ENCODE measurements at regions of chr17 and their contacts with region 1.

Region 1: GRCh38 chr17:42577532-42578281 is at the start of gene PSMC3IP:
- DNase-seq: peak; percentile 81 to 95 (median 90)
- ATAC-seq: peak; percentile 89
- H3K4me3 ChIP-seq: peak within 1 kb of the TSS; percentile 67
- H3K4me3 Mint-ChIP-seq: peak within 1 kb of the TSS; percentile 97
- H3K27ac ChIP-seq: peak within 1 kb of the TSS; percentile 49 to 67
- H3K27ac Mint-ChIP-seq: peak within 1 kb of the TSS; percentile 80
- H3K4me1 ChIP-seq: peaks cover 21% of the 10 kb centered on the region
- H3K4me1 Mint-ChIP-seq: peaks cover 32% of the 10 kb centered on the region
- H3K27me3 ChIP-seq: no peaks in the 10 kb centered on the region
- H3K27me3 Mint-ChIP-seq: no peaks in the 10 kb centered on the region
- CTCF ChIP-seq: peak; percentile 53
- total RNA-seq, gene PSMC3IP: 2.6 to 3.4 TPM

Region 2: GRCh38 chr17:42548070-42548837 is 29.5 kb before region 1 on chr17:
- CTCF ChIA-PET with region 1: interaction called, 3 read pairs
- POLR2A ChIA-PET with region 1: interaction called, 9 read pairs
- intact Hi-C with region 1: loop called in 1 of 2 experiments (anchors 1 kb)
- DNase-seq: peak; percentile 67 to 92 (median 80)
- ATAC-seq: peak; percentile 97
- H3K4me3 ChIP-seq: peak overlapping the region; percentile 26
- H3K4me3 Mint-ChIP-seq: peak overlapping the region; percentile 35
- H3K27ac ChIP-seq: no peak overlapping the region
- H3K27ac Mint-ChIP-seq: no peak overlapping the region
- H3K4me1 ChIP-seq: peaks cover 21% of the 10 kb centered on the region
- H3K4me1 Mint-ChIP-seq: peaks cover 16% of the 10 kb centered on the region
- H3K27me3 ChIP-seq: no peaks in the 10 kb centered on the region
- H3K27me3 Mint-ChIP-seq: no peaks in the 10 kb centered on the region
- CTCF ChIP-seq: peak; percentile 62

Region 3: DNA sequence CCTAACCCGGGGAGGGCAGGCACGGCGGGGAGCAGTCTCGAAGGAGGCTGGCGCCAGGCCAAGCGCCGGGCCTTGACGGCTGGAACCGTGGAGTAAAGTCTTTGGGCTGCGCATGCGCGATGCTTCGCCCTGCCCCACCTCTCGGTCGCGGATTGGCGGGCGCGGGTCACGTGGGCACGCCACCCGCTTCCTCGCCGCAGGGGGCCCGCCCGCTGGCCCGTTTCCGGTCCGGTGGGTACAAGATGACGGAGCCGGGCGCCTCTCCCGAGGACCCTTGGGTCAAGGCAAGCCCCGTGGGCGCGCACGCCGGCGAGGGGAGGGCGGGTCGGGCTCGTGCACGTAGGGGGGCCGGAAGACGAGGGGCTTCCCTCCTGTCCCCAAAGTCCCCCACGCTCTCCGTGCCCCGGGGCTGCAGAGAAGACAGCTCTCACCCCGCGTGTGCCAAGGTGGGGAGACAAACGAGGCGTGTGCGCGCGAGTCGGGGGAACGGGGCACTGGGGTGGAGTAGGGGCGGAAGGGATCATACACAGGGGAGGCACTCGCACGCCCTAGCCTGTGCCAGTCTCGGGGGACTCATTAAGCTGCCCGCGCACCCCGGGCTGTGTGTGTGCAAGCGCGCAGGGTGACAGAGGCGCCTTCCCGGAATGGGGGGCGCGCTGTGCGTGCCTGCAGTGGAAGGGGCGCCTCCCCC is 10.7 kb before region 1 on chr17 and contains the start of gene MLX:
- CTCF ChIA-PET with region 1: interaction called, 45 read pairs
- POLR2A ChIA-PET with region 1: interaction called, 26 read pairs
- intact Hi-C with region 1: no loop called
- DNase-seq: peak; percentile 83 to 97 (median 90)
- ATAC-seq: peak; percentile 68
- H3K4me3 ChIP-seq: peak within 1 kb of the TSS; percentile 96
- H3K4me3 Mint-ChIP-seq: peak within 1 kb of the TSS; percentile 97
- H3K27ac ChIP-seq: peak within 1 kb of the TSS; percentile 83 to 86
- H3K27ac Mint-ChIP-seq: peak within 1 kb of the TSS; percentile 96
- H3K4me1 ChIP-seq: peaks cover 64% of the 10 kb centered on the region
- H3K4me1 Mint-ChIP-seq: peaks cover 42% of the 10 kb centered on the region
- H3K27me3 ChIP-seq: no peaks in the 10 kb centered on the region
- H3K27me3 Mint-ChIP-seq: no peaks in the 10 kb centered on the region
- CTCF ChIP-seq: no peak
- total RNA-seq, gene MLX: 29.2 to 32.1 TPM

Region 4: GRCh38 chr17:42642336-42642735 is 64.6 kb after region 1 on chr17:
- CTCF ChIA-PET with region 1: no interaction called
- POLR2A ChIA-PET with region 1: no interaction called
- intact Hi-C with region 1: no loop called
- DNase-seq: no peak
- ATAC-seq: no peak
- H3K4me3 ChIP-seq: no peak overlapping the region
- H3K4me3 Mint-ChIP-seq: no peak overlapping the region
- H3K27ac ChIP-seq: no peak overlapping the region
- H3K27ac Mint-ChIP-seq: no peak overlapping the region
- H3K4me1 ChIP-seq: no peaks in the 10 kb centered on the region
- H3K4me1 Mint-ChIP-seq: no peaks in the 10 kb centered on the region
- H3K27me3 ChIP-seq: no peaks in the 10 kb centered on the region
- H3K27me3 Mint-ChIP-seq: peaks cover 14% of the 10 kb centered on the region
- CTCF ChIP-seq: no peak

Region 5: GRCh38 chr17:42677008-42677857 is 99.5 kb after region 1 on chr17:
- CTCF ChIA-PET with region 1: interaction called, 24 read pairs
- POLR2A ChIA-PET with region 1: interaction called, 22 read pairs
- intact Hi-C with region 1: loop called (anchors 1 to 2 kb)
- DNase-seq: peak; percentile 92 to 99 (median 97)
- ATAC-seq: peak; percentile 85
- H3K4me3 ChIP-seq: peak overlapping the region; percentile 61
- H3K4me3 Mint-ChIP-seq: peak overlapping the region; percentile 93
- H3K27ac ChIP-seq: no peak overlapping the region
- H3K27ac Mint-ChIP-seq: peak overlapping the region; percentile 79
- H3K4me1 ChIP-seq: peaks cover 79% of the 10 kb centered on the region
- H3K4me1 Mint-ChIP-seq: peaks cover 57% of the 10 kb centered on the region
- H3K27me3 ChIP-seq: peaks cover 58 to 62% of the 10 kb centered on the region in 2 experiments
- H3K27me3 Mint-ChIP-seq: peaks cover 55% of the 10 kb centered on the region
- CTCF ChIP-seq: no peak

Region 6: GRCh38 chr17:42819944-42820535 is 242.3 kb after region 1 on chr17:
- CTCF ChIA-PET with region 1: interaction called, 8 read pairs
- POLR2A ChIA-PET with region 1: interaction called, 11 read pairs
- intact Hi-C with region 1: no loop called
- DNase-seq: peak; percentile 29 to 79 (median 48)
- ATAC-seq: no peak
- H3K4me3 ChIP-seq: no peak overlapping the region
- H3K4me3 Mint-ChIP-seq: peak overlapping the region; percentile 43
- H3K27ac ChIP-seq: no peak overlapping the region
- H3K27ac Mint-ChIP-seq: peak overlapping the region; percentile 49
- H3K4me1 ChIP-seq: peaks cover 22% of the 10 kb centered on the region
- H3K4me1 Mint-ChIP-seq: peaks cover 28% of the 10 kb centered on the region
- H3K27me3 ChIP-seq: no peaks in the 10 kb centered on the region
- H3K27me3 Mint-ChIP-seq: no peaks in the 10 kb centered on the region
- CTCF ChIP-seq: peak; percentile 72